ENCODE measurements at regions of chr1 and their contacts with region 1.

Region 1: GRCh38 chr1:112619520-112620376 is at the start of gene CAPZA1:
- DNase-seq: peak; percentile 95
- H3K4me3 Mint-ChIP-seq: peak within 1 kb of the TSS; percentile 96
- H3K27ac Mint-ChIP-seq: peak within 1 kb of the TSS; percentile 100
- H3K4me1 Mint-ChIP-seq: peaks cover 29% of the 10 kb centered on the region
- H3K27me3 Mint-ChIP-seq: no peaks in the 10 kb centered on the region
- total RNA-seq, gene CAPZA1: 261 to 274 TPM

Region 2: GRCh38 chr1:112390775-112391602 is 228.8 kb before region 1 on chr1:
- CTCF ChIA-PET with region 1: interaction called, 21 read pairs
- POLR2A ChIA-PET with region 1: interaction called, 7 read pairs
- intact Hi-C with region 1: loop called (anchors 1 kb)
- DNase-seq: peak; percentile 89
- H3K4me3 Mint-ChIP-seq: peak overlapping the region; percentile 55
- H3K27ac Mint-ChIP-seq: no peak overlapping the region
- H3K4me1 Mint-ChIP-seq: peaks cover 34% of the 10 kb centered on the region
- H3K27me3 Mint-ChIP-seq: peaks cover 19% of the 10 kb centered on the region

Region 3: DNA sequence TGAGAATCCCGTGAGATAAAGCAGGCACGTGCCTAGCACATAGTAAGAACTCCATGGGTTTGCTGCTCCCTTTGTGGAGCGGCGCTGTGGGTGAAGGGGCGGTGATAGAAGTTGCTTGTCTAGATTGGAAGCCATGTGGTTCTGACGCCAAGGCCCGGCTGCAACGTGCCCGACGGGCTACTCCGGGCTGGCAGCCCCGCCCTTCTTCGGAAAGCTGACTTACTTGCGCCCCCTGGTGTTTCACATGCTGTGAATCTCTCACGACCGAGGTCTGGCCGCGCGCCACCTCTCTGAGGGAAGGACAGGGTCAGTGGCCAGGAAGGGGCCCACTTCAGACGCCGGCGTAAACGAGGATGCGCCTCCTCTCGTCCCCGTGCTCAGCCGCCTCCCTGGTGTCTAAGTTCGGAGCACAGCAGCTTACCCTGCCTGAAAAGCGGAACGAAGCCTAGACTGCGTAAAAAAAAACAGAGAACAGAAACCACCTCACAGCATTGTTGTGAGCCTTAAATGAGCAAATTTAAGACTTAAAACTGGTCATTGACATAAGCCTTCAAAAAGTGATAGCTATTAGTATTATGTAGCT is 153.6 kb before region 1 on chr1:
- CTCF ChIA-PET with region 1: interaction called, 12 read pairs
- POLR2A ChIA-PET with region 1: no interaction called
- intact Hi-C with region 1: no loop called
- DNase-seq: peak; percentile 91
- H3K4me3 Mint-ChIP-seq: peak overlapping the region; percentile 74
- H3K27ac Mint-ChIP-seq: no peak overlapping the region
- H3K4me1 Mint-ChIP-seq: peaks cover 8% of the 10 kb centered on the region
- H3K27me3 Mint-ChIP-seq: peaks cover 15% of the 10 kb centered on the region

Region 4: GRCh38 chr1:112637254-112638116 is 17.7 kb after region 1 on chr1:
- CTCF ChIA-PET with region 1: interaction called, 4 read pairs
- POLR2A ChIA-PET with region 1: interaction called, 4 read pairs
- intact Hi-C with region 1: loop called (anchors 2 kb)
- DNase-seq: no peak
- H3K4me3 Mint-ChIP-seq: no peak overlapping the region
- H3K27ac Mint-ChIP-seq: no peak overlapping the region
- H3K4me1 Mint-ChIP-seq: peaks cover 59% of the 10 kb centered on the region
- H3K27me3 Mint-ChIP-seq: no peaks in the 10 kb centered on the region

Region 5: DNA sequence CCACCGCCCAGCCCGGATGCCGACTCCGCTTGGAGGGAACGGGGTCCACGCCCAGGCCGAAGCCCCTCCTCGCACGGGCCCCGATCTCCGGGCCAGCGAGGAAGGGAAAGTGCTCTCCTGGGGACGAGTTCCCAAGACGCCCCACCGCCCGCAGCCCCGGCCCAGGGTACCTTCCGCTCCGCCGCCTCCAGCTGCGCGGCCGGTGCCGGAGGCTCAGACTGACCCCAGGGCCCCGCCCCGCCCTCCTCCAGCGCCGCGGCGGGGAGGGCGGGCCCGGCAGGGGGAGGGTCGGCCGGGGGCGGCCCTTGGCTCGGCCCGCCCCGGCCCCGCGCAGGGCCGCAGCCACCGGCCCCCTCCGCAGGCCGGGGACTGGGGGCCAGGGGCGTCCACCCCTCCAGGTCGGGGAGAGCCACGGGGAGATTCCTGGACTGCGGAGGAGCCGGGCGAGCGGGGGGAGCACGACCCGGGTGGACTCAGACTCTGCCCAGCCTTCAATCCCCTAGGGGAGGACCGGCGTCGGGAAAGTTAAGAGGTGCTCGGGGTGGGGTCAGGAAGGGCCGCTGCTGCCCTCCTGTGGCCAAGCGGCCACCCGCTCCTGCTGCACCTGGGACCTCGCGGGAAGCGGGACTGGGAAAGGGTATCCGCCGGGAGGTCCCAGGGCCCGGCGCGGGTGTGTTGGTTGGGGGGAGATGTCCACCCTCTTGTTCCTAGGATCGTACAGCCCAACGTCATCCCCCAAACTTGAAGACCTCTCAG is 87.3 kb after region 1 on chr1 and contains the start of gene RHOC:
- CTCF ChIA-PET with region 1: interaction called, 5 read pairs
- POLR2A ChIA-PET with region 1: interaction called, 7 read pairs
- intact Hi-C with region 1: loop called (anchors 1 kb)
- DNase-seq: peak; percentile 83
- H3K4me3 Mint-ChIP-seq: peak within 1 kb of the TSS; percentile 65
- H3K27ac Mint-ChIP-seq: no peak within 1 kb of the TSS
- H3K4me1 Mint-ChIP-seq: peaks cover 38% of the 10 kb centered on the region
- H3K27me3 Mint-ChIP-seq: peaks cover 3% of the 10 kb centered on the region
- total RNA-seq, gene RHOC: 50.1 to 51.6 TPM

Measured in activated CD4-positive, alpha-beta memory T cell treated with anti-CD3 and anti-CD28 coated beads for 36 hours (primary cell).